Right ventricle myocardium inferior (tissue), 1 donor: ENCODE measurements at regions of chr4 and their contacts with region 1.

Region 1: DNA sequence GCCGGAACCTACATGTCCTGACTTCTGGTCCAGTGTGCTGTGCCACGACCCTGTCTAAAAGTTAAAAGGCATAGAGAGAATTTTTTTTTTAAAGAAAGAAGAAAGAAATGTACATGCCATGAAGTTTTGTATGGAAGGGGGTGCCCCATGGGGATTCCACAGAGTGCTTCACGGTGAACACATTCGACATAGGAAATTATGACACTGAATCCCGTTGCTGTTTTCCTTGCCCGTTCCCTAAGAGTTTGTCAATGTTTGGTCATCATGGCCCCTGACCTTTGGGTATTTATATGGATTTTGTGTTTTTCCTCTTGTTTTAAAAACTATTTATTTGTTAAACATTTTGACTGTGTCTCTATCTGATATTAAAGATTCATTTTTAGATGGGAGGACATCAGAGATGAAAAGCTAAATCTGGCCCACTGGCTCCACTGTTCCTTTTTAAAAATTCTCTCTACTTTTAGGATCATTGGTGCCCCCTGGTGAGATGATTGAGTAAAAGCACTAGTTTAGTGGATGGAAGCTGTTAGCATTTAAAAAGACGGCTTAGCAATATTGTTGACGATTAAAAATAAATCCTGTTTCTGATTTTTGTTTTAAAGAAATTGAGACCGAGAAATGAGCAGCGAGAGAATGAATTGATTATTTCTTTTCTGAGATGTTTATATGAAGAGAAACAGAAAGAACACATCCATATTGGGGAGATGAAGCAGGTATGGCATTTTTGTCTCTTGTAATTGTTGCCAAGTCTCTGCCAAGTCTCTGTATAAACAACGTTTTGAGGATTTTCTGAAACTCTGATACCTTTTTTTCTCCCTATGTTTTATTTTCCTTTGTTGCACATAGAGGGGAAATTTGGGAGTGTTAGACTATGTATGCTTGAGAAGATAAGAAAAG is 75.0 kb downstream of the PTTG2 start:
- DNase-seq: no peak
- ATAC-seq: no peak

Region 2: DNA sequence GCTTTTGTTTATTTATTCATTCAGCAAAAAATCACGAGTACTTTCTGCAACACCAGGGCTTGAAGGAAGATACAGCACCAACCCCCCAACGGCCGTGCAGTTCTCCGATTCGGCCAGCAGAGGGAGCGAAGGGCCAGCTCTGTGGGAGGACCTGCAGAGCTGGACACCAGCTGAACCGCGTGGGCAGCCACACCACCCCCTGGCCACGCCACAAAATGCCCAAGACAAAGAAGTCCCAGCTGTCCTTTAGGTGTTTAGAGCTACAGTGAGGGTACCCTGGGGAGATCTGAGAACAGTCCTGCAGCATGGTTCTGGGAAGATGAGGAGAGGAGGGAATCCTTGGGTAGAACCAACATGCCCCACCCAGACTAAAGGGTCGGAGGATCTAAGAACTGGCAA is 432.2 kb before region 1 on chr4:
- intact Hi-C with region 1: loop called (anchors 5 kb)
- DNase-seq: peak; percentile 91
- ATAC-seq: peak; percentile 96

Region 3: GRCh38 chr4:37666625-37667071 is 368.6 kb before region 1 on chr4:
- intact Hi-C with region 1: loop called (anchors 10 kb)
- DNase-seq: no peak
- ATAC-seq: no peak

Region 4: DNA sequence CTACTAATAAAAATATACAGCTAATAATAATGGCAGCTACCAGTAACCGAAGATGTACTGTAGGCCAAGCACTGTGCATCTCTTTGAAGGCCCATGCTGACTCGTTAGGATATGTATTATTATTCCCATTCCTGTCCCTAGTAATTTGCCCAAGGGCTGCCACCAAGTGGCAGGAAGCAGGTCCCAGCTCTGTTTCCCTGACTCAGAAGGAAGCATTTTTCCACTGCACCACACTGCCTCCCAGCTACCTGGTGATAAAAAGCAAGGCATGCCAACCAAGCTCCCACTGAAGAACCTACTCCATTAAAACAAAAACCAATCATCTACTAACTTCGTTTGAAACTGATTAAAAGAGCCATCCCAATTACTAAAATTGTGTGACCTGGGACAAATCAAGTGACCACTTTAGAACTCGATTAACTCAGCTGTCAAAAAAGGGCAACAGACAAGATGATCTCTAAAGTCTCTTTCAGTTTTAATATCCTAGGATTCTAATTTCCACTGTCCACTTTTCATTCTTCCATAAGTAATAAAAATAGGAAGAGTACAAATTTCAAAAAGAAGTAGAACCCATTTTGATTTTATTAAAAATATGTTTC is 233.1 kb before region 1 on chr4:
- intact Hi-C with region 1: loop called (anchors 1 kb)
- DNase-seq: no peak
- ATAC-seq: peak; percentile 83

Region 5: GRCh38 chr4:37891260-37892159 is 143.7 kb before region 1 on chr4:
- intact Hi-C with region 1: loop called (anchors 2 kb)
- DNase-seq: no peak
- ATAC-seq: peak; percentile 19

Region 6: DNA sequence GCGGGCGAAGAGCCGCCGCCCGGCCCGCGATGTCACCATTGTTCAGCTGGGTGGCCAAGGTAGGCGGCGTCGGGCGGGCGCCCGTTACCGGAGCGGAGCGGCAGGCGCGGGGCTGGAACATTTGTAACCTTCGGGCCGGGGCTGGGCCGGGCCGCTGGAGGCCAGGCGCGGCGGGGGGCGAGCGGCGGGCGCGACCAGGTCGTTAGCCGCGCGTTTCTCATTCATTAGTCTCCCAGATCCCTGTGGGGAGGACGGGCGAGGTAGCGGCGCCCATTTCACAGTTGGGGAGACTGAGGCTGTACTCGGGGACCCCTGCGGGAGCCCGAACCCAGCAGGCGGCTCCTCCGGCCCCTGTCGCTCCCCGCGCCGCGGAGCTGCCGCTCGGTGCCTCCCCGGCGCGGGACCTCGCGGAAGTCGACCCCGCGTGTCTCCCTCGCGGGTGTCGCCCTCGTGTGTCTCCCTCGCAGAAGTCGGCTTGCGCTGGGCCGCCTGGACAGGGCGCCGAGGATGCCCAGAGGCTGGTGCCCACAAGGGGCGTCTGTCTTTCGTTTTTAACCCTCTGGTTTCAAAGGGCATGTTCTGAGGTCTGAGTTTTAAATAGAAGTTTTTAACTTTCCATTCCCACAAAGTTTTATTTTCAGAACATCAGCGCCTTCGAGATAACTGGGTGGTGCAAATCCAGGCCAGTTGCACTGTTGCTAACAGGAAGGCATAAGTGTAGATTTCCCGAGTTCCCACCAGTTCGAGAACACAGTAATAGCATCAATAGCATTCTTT is 57.6 kb before region 1 on chr4:
- intact Hi-C with region 1: loop called (anchors 5 kb)
- DNase-seq: peak; percentile 93
- ATAC-seq: peak; percentile 87